Activated B cell treated with CpG ODN at 0.5 μM for 24 hours (primary cell): ENCODE measurements at regions of chr3 and their contacts with region 1.

Region 1: DNA sequence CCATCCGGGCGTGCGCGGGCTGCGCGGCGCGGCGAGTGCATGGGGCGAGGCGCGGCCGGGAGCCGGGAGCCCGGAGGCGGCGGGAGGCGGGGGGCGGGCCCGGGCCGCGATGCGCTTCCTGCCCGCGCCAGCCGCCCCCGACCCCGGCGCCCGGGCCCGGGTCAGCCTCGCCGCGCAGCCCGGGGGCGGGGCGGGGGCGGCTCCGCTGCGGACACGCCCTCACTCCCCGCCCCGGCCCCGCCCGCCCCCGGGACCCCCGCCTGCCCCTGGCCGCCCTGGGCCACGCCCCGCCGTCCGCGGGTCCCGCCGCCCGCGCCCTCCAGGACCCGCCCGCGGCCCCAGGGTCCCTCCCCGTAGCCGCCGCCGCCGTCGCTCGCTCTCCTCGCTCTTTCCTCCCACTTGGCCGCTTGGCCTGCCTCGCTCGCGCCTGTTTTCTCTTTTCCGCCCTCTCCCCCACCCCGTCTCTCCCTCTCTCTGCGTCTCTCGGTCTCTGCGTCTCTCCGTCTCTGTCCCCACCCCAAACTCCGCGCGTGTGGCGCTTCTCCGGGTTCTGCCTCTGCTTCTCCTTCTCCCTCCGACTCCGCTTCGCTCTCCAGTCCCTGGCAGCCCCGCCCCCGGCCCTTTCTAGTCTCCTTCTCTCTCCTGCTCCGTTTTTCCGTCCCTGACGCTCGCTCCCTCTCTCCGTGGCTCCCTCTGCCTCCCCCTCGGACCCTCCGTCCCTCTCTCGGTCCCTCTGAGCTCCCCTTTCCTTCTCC is at the start of gene PLXND1:
- DNase-seq: peak; percentile 34
- ATAC-seq: peak; percentile 75
- H3K4me3 Mint-ChIP-seq: peak within 1 kb of the TSS; percentile 86
- H3K27ac Mint-ChIP-seq: no peak within 1 kb of the TSS
- H3K4me1 Mint-ChIP-seq: peaks cover 10% of the 10 kb centered on the region
- H3K27me3 Mint-ChIP-seq: peaks cover 24% of the 10 kb centered on the region
- CTCF ChIP-seq: no peak
- total RNA-seq, gene PLXND1: 3.1 and 3.7 TPM in 2 replicates

Region 2: DNA sequence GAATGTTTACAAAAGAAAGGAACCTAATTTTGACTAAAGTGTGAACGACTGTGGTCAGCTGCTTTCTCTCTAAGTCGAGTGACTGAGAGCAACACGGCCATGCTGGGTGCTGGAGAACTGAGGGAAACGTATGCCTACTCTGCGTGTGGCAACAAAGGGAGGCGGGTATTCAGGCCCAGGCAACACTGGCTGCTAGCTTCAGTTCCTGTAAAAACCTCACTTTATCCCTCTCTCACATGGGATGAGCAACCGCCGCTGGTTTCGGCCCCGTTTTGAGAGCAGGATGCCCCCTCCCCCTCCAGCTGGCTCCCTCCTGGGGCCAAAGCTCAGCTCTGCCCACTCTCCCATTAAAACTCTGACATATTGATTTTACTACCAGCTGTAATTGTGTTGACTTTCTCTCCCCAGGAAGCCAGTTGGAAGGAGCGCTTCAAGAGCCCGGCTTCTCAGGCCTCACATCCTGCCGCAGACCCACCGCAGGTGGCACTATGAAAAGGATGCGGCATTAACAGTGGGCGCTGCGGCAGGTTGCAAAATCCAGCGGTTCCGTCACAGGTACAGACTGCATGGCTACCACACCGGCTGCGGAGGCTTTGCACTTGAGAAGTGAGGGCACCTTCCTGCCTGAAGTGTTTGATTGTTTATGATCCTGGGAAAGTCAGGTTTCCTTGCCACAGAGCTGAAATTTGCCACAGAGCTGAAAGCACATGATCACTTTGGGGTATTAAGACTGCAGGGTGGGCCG is 13.0 kb before region 1 on chr3:
- CTCF ChIA-PET with region 1: no interaction called
- POLR2A ChIA-PET with region 1: interaction called, 3 read pairs
- intact Hi-C with region 1: loop called (anchors 2 kb)
- DNase-seq: no peak
- ATAC-seq: peak; percentile 5
- H3K4me3 Mint-ChIP-seq: peak overlapping the region; percentile 39
- H3K27ac Mint-ChIP-seq: no peak overlapping the region
- H3K4me1 Mint-ChIP-seq: peaks cover 24% of the 10 kb centered on the region
- H3K27me3 Mint-ChIP-seq: peaks cover 14% of the 10 kb centered on the region
- CTCF ChIP-seq: no peak